PC-9 (cell line): ENCODE measurements at regions of chr6 and their contacts with region 1.

Region 1: DNA sequence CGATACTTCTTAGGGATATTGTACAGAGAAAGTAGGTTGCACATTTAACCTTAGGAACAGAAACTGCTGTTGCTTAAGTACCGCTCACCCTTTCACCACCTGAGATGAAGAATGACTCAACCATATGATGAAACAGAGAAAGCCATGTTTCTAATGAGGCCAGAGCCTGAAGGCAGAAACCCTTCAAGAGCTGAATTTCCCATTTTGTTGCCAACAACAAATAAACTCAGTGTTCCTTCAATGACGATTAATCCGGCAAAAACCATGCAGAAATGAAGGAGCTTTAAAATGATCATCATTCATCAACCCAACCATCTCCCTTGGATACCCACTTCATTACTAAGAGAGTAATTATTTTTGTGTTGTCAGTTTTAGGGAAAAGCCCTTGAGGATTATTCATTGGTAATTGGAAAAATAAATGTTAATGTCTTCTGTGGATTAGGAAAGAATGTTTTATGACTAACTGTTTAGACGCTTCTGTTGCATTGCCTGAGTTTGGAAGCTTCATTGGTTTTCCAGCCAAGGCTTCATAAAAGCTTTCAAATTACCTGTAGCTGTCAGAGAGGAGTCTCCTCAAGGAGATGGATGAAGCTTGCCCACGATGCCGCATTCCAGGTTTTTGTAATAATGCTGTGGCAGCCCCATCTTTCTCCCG is 112.1 kb upstream of the IYD start:
- DNase-seq: peak; percentile 26 to 93
- H3K4me3 ChIP-seq: peak overlapping the region; percentile 14; the same call in 1 of the 2 replicates
- H3K27ac ChIP-seq: peak overlapping the region; percentile 96
- H3K4me1 ChIP-seq: peaks cover 62% of the 10 kb centered on the region
- H3K27me3 ChIP-seq: no peaks in the 10 kb centered on the region
- CTCF ChIP-seq: no peak

Region 2: GRCh38 chr6:149855037-149855654 is 401.6 kb before region 1 on chr6:
- CTCF ChIA-PET with region 1: no interaction called
- POLR2A ChIA-PET with region 1: no interaction called
- intact Hi-C with region 1: no loop called
- DNase-seq: peak; percentile 63 to 98
- H3K4me3 ChIP-seq: peak overlapping the region; percentile 57
- H3K27ac ChIP-seq: peak overlapping the region; percentile 96
- H3K4me1 ChIP-seq: peaks cover 90% of the 10 kb centered on the region
- H3K27me3 ChIP-seq: no peaks in the 10 kb centered on the region
- CTCF ChIP-seq: no peak

Region 3: GRCh38 chr6:150176152-150176551 is 80.6 kb before region 1 on chr6:
- CTCF ChIA-PET with region 1: no interaction called
- POLR2A ChIA-PET with region 1: no interaction called
- intact Hi-C with region 1: loop called (anchors 1 kb)
- DNase-seq: peak; percentile 43 to 71
- H3K4me3 ChIP-seq: no peak overlapping the region
- H3K27ac ChIP-seq: peak overlapping the region; percentile 76
- H3K4me1 ChIP-seq: peaks cover 48% of the 10 kb centered on the region
- H3K27me3 ChIP-seq: no peaks in the 10 kb centered on the region
- CTCF ChIP-seq: no peak